ENCODE measurements at regions of chr14 and their contacts with region 1.

Region 1: GRCh38 chr14:20970983-20971704 is 15.9 kb downstream of the RNASE2 start:
- DNase-seq: peak; percentile 91
- ATAC-seq: peak; percentile 93
- H3K4me3 Mint-ChIP-seq: peak overlapping the region; percentile 89
- H3K27ac Mint-ChIP-seq: peak overlapping the region; percentile 91
- H3K4me1 Mint-ChIP-seq: peaks cover 13% of the 10 kb centered on the region
- H3K27me3 Mint-ChIP-seq: peaks cover 24% of the 10 kb centered on the region
- CTCF ChIP-seq: peak; percentile 67

Region 2: GRCh38 chr14:20818861-20819260 is 152.3 kb before region 1 on chr14:
- CTCF ChIA-PET with region 1: interaction called, 30 read pairs
- POLR2A ChIA-PET with region 1: no interaction called
- DNase-seq: peak; percentile 36
- ATAC-seq: peak; percentile 50
- H3K4me3 Mint-ChIP-seq: no peak overlapping the region
- H3K27ac Mint-ChIP-seq: no peak overlapping the region
- H3K4me1 Mint-ChIP-seq: peaks cover 53% of the 10 kb centered on the region
- H3K27me3 Mint-ChIP-seq: no peaks in the 10 kb centered on the region
- CTCF ChIP-seq: no peak

Region 3: GRCh38 chr14:20873370-20874177 is 97.6 kb before region 1 on chr14:
- CTCF ChIA-PET with region 1: interaction called, 52 read pairs
- POLR2A ChIA-PET with region 1: no interaction called
- DNase-seq: peak; percentile 95
- ATAC-seq: peak; percentile 98
- H3K4me3 Mint-ChIP-seq: peak overlapping the region; percentile 58
- H3K27ac Mint-ChIP-seq: peak overlapping the region; percentile 49; the same call in 1 of the 2 replicates
- H3K4me1 Mint-ChIP-seq: peaks cover 9% of the 10 kb centered on the region
- H3K27me3 Mint-ChIP-seq: peaks cover 48% of the 10 kb centered on the region
- CTCF ChIP-seq: peak; percentile 74

Region 4: DNA sequence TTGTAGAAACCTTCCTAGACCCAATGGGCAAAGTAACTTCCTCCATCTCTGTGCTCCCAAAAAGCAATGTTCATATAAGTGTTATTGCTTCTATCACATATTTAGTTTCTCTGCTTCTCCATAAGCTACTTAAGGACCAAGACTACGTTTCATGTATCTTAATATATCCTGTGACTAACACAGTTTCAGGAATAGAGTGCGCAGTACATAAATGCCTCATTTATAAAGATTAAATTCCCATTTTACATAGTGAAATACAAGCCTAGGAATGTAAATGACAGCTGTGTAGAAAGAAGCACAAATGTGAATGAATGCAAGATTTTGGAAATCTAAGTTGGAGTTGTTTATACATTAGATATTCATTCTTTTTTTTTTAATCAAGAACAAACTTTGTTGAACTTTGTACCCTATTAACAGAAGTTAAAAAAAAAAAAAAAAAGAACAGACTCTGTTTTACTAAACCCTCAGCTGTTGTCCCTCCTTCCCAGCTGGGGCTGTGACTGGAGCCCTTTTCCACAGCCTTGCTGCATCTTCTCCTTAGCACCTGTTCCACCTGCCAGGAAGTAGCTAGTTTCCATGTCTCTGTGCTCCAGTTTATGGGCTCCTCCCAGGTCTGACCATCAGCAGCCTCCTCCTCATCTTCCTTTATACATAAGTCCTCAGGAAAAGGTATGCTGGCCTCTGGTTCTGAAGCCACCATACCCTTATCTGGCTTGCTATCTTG is 11.7 kb after region 1 on chr14:
- CTCF ChIA-PET with region 1: interaction called, 40 read pairs
- POLR2A ChIA-PET with region 1: no interaction called
- DNase-seq: no peak
- ATAC-seq: no peak
- H3K4me3 Mint-ChIP-seq: no peak overlapping the region
- H3K27ac Mint-ChIP-seq: no peak overlapping the region
- H3K4me1 Mint-ChIP-seq: no peaks in the 10 kb centered on the region
- H3K27me3 Mint-ChIP-seq: peaks cover 11% of the 10 kb centered on the region
- CTCF ChIP-seq: no peak

Region 5: DNA sequence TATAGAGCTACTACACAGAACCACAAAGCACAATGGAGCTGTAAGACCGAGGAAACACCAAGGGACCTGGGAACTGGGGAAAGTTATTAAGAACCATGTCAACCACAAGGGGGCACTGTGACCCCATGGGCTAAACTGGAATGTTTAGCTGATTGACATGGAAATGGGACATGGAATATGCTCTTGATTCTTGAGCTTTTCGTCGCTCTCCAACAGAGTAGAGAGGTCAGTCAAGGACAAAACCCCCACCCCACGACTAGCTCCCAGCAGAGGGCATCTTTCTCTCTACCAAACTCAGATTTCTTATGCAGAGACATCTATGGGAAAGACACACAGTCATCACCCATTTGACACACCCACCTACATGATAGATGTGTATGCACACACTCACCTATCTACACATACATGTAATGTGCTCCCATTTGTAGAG is 43.6 kb after region 1 on chr14:
- CTCF ChIA-PET with region 1: interaction called, 30 read pairs
- POLR2A ChIA-PET with region 1: no interaction called
- DNase-seq: peak; percentile 92
- ATAC-seq: peak; percentile 91
- H3K4me3 Mint-ChIP-seq: no peak overlapping the region
- H3K27ac Mint-ChIP-seq: no peak overlapping the region
- H3K4me1 Mint-ChIP-seq: peaks cover 12% of the 10 kb centered on the region
- H3K27me3 Mint-ChIP-seq: peaks cover 3% of the 10 kb centered on the region
- CTCF ChIP-seq: peak; percentile 84

Region 6: GRCh38 chr14:21092273-21093011 is 121.3 kb after region 1 on chr14:
- CTCF ChIA-PET with region 1: interaction called, 23 read pairs
- POLR2A ChIA-PET with region 1: no interaction called
- DNase-seq: peak; percentile 94
- ATAC-seq: peak; percentile 27
- H3K4me3 Mint-ChIP-seq: peak overlapping the region; percentile 66
- H3K27ac Mint-ChIP-seq: peak overlapping the region; percentile 94
- H3K4me1 Mint-ChIP-seq: peaks cover 64% of the 10 kb centered on the region
- H3K27me3 Mint-ChIP-seq: no peaks in the 10 kb centered on the region
- CTCF ChIP-seq: peak; percentile 100

Measured in WTC11 (cell line).